Activated T-helper 2 cell treated with anti-CD3 and anti-CD28 coated beads, Interferon-gamma antibody, Interleukin-2, Interleukin-4, amounts not matched to agents 10 μg/mL and 5 μg/mL and 100 μg/mL, durations not matched to agents 14 hours and 24 hours and 36 hours (primary cell): ENCODE measurements at regions of chr13 and their contacts with region 1.

Region 1: DNA sequence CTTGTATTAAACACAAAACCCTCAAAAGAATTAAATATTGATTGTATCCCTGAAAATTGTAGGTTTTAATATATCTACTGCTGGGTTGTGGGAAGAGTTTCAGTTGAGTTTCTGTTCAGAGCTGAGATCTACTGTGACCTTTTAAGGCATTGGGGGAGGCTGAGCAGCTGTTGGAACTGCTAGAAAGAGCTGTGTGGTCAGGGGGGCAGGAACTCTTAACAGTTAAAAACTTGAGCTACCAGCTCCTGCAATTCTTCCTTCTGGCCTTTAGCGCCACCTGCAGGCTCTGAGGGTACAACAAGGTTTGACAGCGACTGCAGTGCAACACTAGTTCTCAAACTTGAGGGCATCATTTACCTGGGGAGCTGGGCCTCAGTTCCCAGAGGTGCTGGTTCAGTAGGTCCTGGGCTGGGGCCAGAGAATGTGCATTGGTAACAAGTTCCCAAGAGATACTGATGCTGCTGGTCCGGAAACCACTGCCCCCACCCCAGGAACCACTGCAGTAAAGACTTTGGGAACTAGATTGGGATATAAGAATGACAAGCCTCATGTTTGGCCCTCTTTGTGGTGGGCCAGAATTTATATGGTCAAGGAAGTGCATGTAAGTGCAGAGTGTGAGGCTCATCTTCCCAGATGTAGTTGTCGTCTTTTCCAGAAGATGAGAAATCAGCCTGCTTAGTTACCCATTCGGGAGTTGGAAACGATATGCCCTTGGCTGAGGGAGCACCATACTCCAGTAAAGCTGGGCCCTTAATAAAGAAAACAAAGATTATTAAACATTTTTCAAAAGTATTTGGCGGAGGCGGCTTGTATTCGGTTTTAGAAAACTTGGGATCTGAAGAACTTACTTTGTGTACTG is 2.6 kb downstream of the RNASEH2B start:
- DNase-seq: peak; percentile 88
- H3K4me3 Mint-ChIP-seq: peak overlapping the region; percentile 93
- H3K27ac Mint-ChIP-seq: peak overlapping the region; percentile 89
- H3K4me1 Mint-ChIP-seq: peaks cover 63% of the 10 kb centered on the region
- H3K27me3 Mint-ChIP-seq: no peaks in the 10 kb centered on the region

Region 2: GRCh38 chr13:49936085-49936940 is 975.9 kb before region 1 on chr13 and contains the start of gene SPRYD7:
- intact Hi-C with region 1: loop called (anchors 5 kb)
- DNase-seq: peak; percentile 92
- H3K4me3 Mint-ChIP-seq: peak within 1 kb of the TSS; percentile 85
- H3K27ac Mint-ChIP-seq: peak within 1 kb of the TSS; percentile 84
- H3K4me1 Mint-ChIP-seq: peaks cover 9% of the 10 kb centered on the region
- H3K27me3 Mint-ChIP-seq: peaks cover 4% of the 10 kb centered on the region
- total RNA-seq, gene SPRYD7: 8.7 and 9.8 TPM in 2 replicates

Region 3: DNA sequence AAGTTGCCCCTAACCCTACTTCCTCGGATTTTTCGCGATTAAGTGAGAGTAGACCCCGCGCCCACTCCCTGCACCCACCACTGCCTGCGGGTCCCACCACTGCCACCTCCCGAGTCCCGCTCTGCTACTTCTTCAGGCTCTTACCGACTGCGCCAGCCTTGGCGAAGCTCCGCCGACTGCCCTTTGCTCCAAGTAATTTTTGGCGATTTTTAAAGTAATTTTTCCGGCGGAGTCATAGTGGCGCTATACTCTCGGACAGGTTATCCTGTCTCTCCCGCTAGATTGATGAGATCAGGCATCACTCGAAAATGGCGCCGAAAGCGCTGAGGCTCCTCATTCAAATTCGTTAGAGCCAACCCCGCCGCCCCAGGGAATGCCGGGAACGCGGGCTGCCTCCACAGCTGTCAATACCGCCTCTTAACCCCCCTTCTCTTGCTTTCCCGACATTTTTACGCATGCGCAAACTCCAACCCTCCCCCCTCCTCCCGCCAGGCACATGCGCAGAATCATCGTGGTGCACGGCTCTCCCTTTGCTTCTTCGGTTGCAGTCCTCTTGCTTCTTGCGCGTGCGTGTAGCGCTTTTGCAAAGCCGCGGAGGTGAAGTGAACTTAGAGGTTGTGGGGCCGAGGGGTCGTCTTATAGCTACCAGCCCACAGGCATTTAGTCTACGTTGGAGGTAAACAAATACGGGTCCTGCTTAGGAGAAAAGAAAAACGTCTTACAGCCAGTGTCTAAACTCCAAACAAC is 830.3 kb before region 1 on chr13:
- intact Hi-C with region 1: loop called (anchors 1 kb)
- DNase-seq: peak; percentile 99
- H3K4me3 Mint-ChIP-seq: peak overlapping the region; percentile 100
- H3K27ac Mint-ChIP-seq: peak overlapping the region; percentile 100
- H3K4me1 Mint-ChIP-seq: peaks cover 34% of the 10 kb centered on the region
- H3K27me3 Mint-ChIP-seq: no peaks in the 10 kb centered on the region

Region 4: GRCh38 chr13:50236898-50237318 is 675.3 kb before region 1 on chr13:
- intact Hi-C with region 1: loop called (anchors 5 kb)
- DNase-seq: peak; percentile 43
- H3K4me3 Mint-ChIP-seq: no peak overlapping the region
- H3K27ac Mint-ChIP-seq: peak overlapping the region; percentile 56
- H3K4me1 Mint-ChIP-seq: peaks cover 38% of the 10 kb centered on the region
- H3K27me3 Mint-ChIP-seq: peaks cover 32% of the 10 kb centered on the region

Region 5: GRCh38 chr13:50594276-50595051 is 317.7 kb before region 1 on chr13:
- intact Hi-C with region 1: loop called (anchors 2 kb)
- DNase-seq: peak; percentile 22
- H3K4me3 Mint-ChIP-seq: peak overlapping the region; percentile 34
- H3K27ac Mint-ChIP-seq: peak overlapping the region; percentile 74
- H3K4me1 Mint-ChIP-seq: peaks cover 35% of the 10 kb centered on the region
- H3K27me3 Mint-ChIP-seq: peaks cover 5% of the 10 kb centered on the region

Region 6: GRCh38 chr13:50801087-50801931 is 110.9 kb before region 1 on chr13:
- intact Hi-C with region 1: loop called (anchors 1 kb)
- DNase-seq: peak; percentile 53
- H3K4me3 Mint-ChIP-seq: no peak overlapping the region
- H3K27ac Mint-ChIP-seq: no peak overlapping the region
- H3K4me1 Mint-ChIP-seq: peaks cover 20% of the 10 kb centered on the region
- H3K27me3 Mint-ChIP-seq: peaks cover 6% of the 10 kb centered on the region

Region 7: GRCh38 chr13:51125498-51126226 is 213.5 kb after region 1 on chr13:
- intact Hi-C with region 1: loop called (anchors 5 kb)
- DNase-seq: no peak
- H3K4me3 Mint-ChIP-seq: no peak overlapping the region
- H3K27ac Mint-ChIP-seq: no peak overlapping the region
- H3K4me1 Mint-ChIP-seq: peaks cover 25% of the 10 kb centered on the region
- H3K27me3 Mint-ChIP-seq: peaks cover 18% of the 10 kb centered on the region